Common myeloid progenitor, CD34-positive (primary cell): ENCODE measurements at regions of chr3 and their contacts with region 1.

Region 1: GRCh38 chr3:195113044-195113443 is 157.9 kb downstream of the XXYLT1 start:
- DNase-seq: no peak
- H3K4me3 ChIP-seq: no peak overlapping the region
- H3K27ac ChIP-seq: no peak overlapping the region
- H3K4me1 ChIP-seq: peaks cover 15 to 55% (median 42%) of the 10 kb centered on the region in 4 experiments
- H3K27me3 ChIP-seq: no peaks in the 10 kb centered on the region

Region 2: GRCh38 chr3:195123281-195123691 is 10.2 kb after region 1 on chr3:
- CTCF ChIA-PET with region 1: interaction called, 32 read pairs
- POLR2A ChIA-PET with region 1: no interaction called
- DNase-seq: no peak
- H3K4me3 ChIP-seq: no peak overlapping the region
- H3K27ac ChIP-seq: no peak overlapping the region
- H3K4me1 ChIP-seq: peaks cover 0 to 46% (median 29%) of the 10 kb centered on the region in 4 experiments
- H3K27me3 ChIP-seq: no peaks in the 10 kb centered on the region